Activated CD8-positive, alpha-beta memory T cell treated with anti-CD3 and anti-CD28 coated beads, Interleukin-2, amount 10 ng/mL, durations not matched to agents 7 days and 5 days (primary cell): ENCODE measurements at regions of chr10 and their contacts with region 1.

Region 1: DNA sequence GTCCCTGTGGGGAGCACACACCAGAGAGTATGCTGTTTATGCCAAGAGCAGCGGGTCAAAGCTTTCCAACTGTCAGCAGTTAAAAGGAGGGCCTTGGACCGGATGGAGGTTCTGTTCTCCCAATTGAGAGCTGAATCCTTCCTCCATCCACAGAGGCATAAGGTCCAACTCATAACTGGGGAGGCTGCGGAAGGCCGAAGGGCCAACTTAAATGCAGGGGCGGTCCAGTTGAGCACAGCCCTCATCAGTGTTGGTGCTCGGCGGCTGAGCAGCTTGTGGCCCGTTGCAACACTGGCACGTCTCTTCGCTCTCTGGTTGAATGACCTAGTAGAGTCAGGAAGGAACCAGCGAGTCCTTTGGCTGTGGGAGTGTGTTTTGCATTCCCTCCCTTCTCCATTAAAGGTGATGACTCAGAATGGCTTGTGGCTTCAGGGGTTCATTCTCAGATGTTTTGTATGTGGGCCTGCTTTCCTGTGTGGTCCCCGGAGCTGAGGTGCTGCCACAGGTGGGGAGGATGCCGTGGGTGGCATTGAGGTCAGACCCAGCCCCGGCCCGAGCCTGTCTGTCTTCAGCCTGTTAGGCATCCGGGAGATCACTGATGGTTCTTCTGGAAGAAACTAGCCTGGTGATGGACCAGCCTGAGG is 44.8 kb upstream of the DMBT1 start:
- DNase-seq: peak; percentile 88
- ATAC-seq: peak; percentile 85
- H3K4me3 Mint-ChIP-seq: no peak overlapping the region
- H3K27ac Mint-ChIP-seq: peak overlapping the region; percentile 10
- H3K4me1 Mint-ChIP-seq: peaks cover 40% of the 10 kb centered on the region
- H3K27me3 Mint-ChIP-seq: peaks cover 30% of the 10 kb centered on the region

Region 2: GRCh38 chr10:122495406-122496340 is 20.0 kb before region 1 on chr10:
- CTCF ChIA-PET with region 1: interaction called, 10 read pairs
- DNase-seq: no peak
- ATAC-seq: no peak
- H3K4me3 Mint-ChIP-seq: no peak overlapping the region
- H3K27ac Mint-ChIP-seq: no peak overlapping the region
- H3K4me1 Mint-ChIP-seq: peaks cover 23% of the 10 kb centered on the region
- H3K27me3 Mint-ChIP-seq: peaks cover 42% of the 10 kb centered on the region

Region 3: GRCh38 chr10:122637376-122637775 is 121.7 kb after region 1 on chr10:
- CTCF ChIA-PET with region 1: no interaction called
- DNase-seq: no peak
- ATAC-seq: no peak
- H3K4me3 Mint-ChIP-seq: no peak overlapping the region
- H3K27ac Mint-ChIP-seq: no peak overlapping the region
- H3K4me1 Mint-ChIP-seq: no peaks in the 10 kb centered on the region
- H3K27me3 Mint-ChIP-seq: no peaks in the 10 kb centered on the region